ENCODE measurements at regions of chr21 and their contacts with region 1.

Region 1: GRCh38 chr21:25573409-25574206 is 33.7 kb downstream of the MRPL39 start:
- DNase-seq: peak; percentile 82
- H3K4me3 Mint-ChIP-seq: peak overlapping the region; percentile 72
- H3K27ac Mint-ChIP-seq: peak overlapping the region; percentile 95
- H3K4me1 Mint-ChIP-seq: peaks cover 73% of the 10 kb centered on the region
- H3K27me3 Mint-ChIP-seq: no peaks in the 10 kb centered on the region

Region 2: DNA sequence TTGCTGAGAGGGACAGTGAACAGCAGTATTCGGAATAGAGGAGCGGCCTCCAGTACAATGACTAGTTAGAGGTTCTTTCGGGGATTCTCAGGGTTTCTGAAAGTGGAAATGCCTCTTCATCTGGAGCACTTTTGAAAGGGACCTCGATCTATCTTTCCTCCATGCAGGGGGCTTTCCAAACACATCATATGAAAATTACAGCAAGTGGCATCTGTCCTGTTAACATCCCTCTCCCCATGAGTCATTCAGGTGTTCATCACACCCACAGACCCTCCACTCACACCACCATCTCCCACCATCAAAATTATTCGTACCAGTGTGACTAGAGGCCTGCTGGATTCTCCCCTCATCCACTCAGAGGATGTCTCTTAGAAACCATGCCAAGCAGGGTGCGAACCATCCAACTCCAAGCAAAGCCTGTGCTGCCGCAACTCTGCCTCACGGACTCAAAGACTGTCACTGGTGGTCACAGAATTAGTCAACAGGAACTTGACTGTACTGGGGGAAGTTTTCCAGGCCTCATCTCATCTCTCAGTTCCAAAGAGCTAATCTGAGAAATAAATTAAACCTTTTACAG is 177.4 kb before region 1 on chr21:
- CTCF ChIA-PET with region 1: no interaction called
- intact Hi-C with region 1: loop called (anchors 1 kb)
- DNase-seq: peak; percentile 89
- H3K4me3 Mint-ChIP-seq: peak overlapping the region; percentile 41
- H3K27ac Mint-ChIP-seq: peak overlapping the region; percentile 81
- H3K4me1 Mint-ChIP-seq: peaks cover 18% of the 10 kb centered on the region
- H3K27me3 Mint-ChIP-seq: peaks cover 2% of the 10 kb centered on the region

Region 3: DNA sequence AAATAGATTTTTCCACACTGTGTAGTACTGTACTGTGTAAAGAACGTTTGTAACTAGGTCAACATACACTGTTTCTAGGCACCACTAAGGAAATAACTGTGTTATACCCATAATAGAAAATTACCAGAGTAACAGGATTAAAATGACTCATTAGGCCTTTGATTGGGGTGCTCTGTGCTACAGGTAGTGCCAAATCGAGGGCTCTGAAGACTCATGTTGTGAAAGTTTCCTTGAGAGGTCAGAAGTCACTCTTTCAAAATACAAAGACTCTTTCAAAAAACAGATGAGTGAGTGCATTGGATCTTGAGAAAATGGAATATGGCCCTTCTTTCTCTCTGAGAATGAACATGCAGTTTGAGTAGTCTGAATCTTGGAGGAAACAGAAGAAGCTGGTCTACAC is 109.3 kb before region 1 on chr21:
- CTCF ChIA-PET with region 1: no interaction called
- intact Hi-C with region 1: loop called (anchors 1 kb)
- DNase-seq: peak; percentile 51
- H3K4me3 Mint-ChIP-seq: peak overlapping the region; percentile 11
- H3K27ac Mint-ChIP-seq: peak overlapping the region; percentile 90
- H3K4me1 Mint-ChIP-seq: peaks cover 69% of the 10 kb centered on the region
- H3K27me3 Mint-ChIP-seq: no peaks in the 10 kb centered on the region

Region 4: GRCh38 chr21:25501996-25502665 is 71.5 kb before region 1 on chr21:
- CTCF ChIA-PET with region 1: interaction called, 3 read pairs
- intact Hi-C with region 1: loop called (anchors 1 kb)
- DNase-seq: peak; percentile 87
- H3K4me3 Mint-ChIP-seq: peak overlapping the region; percentile 53
- H3K27ac Mint-ChIP-seq: peak overlapping the region; percentile 92
- H3K4me1 Mint-ChIP-seq: peaks cover 78% of the 10 kb centered on the region
- H3K27me3 Mint-ChIP-seq: no peaks in the 10 kb centered on the region

Region 5: GRCh38 chr21:25507522-25507921 is 66.1 kb before region 1 on chr21:
- CTCF ChIA-PET with region 1: interaction called, 5 read pairs
- intact Hi-C with region 1: loop called (anchors 1 kb)
- DNase-seq: peak; percentile 55
- H3K4me3 Mint-ChIP-seq: no peak overlapping the region
- H3K27ac Mint-ChIP-seq: peak overlapping the region; percentile 70
- H3K4me1 Mint-ChIP-seq: peaks cover 75% of the 10 kb centered on the region
- H3K27me3 Mint-ChIP-seq: no peaks in the 10 kb centered on the region

Region 6: GRCh38 chr21:25561668-25562641 is 11.7 kb before region 1 on chr21:
- CTCF ChIA-PET with region 1: interaction called, 12 read pairs
- intact Hi-C with region 1: loop called (anchors 1 kb)
- DNase-seq: peak; percentile 81
- H3K4me3 Mint-ChIP-seq: peak overlapping the region; percentile 91
- H3K27ac Mint-ChIP-seq: peak overlapping the region; percentile 96
- H3K4me1 Mint-ChIP-seq: peaks cover 45% of the 10 kb centered on the region
- H3K27me3 Mint-ChIP-seq: no peaks in the 10 kb centered on the region

Region 7: GRCh38 chr21:25639551-25640201 is 66.1 kb after region 1 on chr21:
- CTCF ChIA-PET with region 1: no interaction called
- intact Hi-C with region 1: loop called (anchors 5 kb)
- DNase-seq: peak; percentile 57
- H3K4me3 Mint-ChIP-seq: peak overlapping the region; percentile 67
- H3K27ac Mint-ChIP-seq: no peak overlapping the region
- H3K4me1 Mint-ChIP-seq: peaks cover 20% of the 10 kb centered on the region
- H3K27me3 Mint-ChIP-seq: peaks cover 31% of the 10 kb centered on the region